IMR-90 (cell line): ENCODE measurements at regions of chr1 and their contacts with region 1.

Region 1: DNA sequence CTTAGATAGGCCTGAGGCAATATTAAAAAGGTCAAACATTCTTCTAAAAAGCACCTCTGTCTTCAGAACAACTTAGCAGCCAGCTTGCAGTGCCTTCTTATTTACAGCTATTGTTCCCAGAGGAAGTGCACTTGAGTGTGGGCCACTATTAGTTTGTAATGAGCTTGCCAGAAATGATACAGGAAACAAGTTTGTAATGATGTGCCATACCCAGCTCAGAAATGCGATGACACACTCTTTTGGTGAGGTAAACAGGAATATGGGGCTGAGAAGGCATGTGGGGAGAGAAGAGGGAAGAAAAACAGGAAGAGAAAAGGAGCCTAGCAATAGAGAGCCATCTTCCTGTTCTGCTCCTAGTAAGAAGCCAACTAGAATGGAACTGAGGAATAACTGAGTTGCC is 295.4 kb downstream of the AGBL4 start:
- DNase-seq: no peak
- ATAC-seq: no peak
- H3K4me3 ChIP-seq: no peak overlapping the region
- H3K27ac ChIP-seq: no peak overlapping the region
- H3K4me1 ChIP-seq: no peaks in the 10 kb centered on the region
- H3K27me3 ChIP-seq: no peaks in the 10 kb centered on the region
- CTCF ChIP-seq: no peak
- POLR2A ChIP-seq: no peak
- RAD21 ChIP-seq: no peak

Region 2: GRCh38 chr1:49111931-49112330 is 616.4 kb before region 1 on chr1:
- CTCF ChIA-PET with region 1: no interaction called
- POLR2A ChIA-PET with region 1: interaction called, 12 read pairs
- dilution Hi-C with region 1: no loop called
- in situ Hi-C with region 1: no loop called
- intact Hi-C with region 1: no loop called
- DNase-seq: no peak
- ATAC-seq: no peak
- H3K4me3 ChIP-seq: no peak overlapping the region
- H3K27ac ChIP-seq: no peak overlapping the region
- H3K4me1 ChIP-seq: no peaks in the 10 kb centered on the region
- H3K27me3 ChIP-seq: no peaks in the 10 kb centered on the region
- CTCF ChIP-seq: no peak
- POLR2A ChIP-seq: no peak
- RAD21 ChIP-seq: no peak